ENCODE measurements at regions of chr17 and their contacts with region 1.

Region 1: GRCh38 chr17:28951991-28952975 is 965 bp upstream of the PHF12 start:
- DNase-seq: peak; percentile 97 to 99
- H3K4me3 ChIP-seq: peak overlapping the region; percentile 64
- H3K4me3 Mint-ChIP-seq: no peak overlapping the region
- H3K27ac Mint-ChIP-seq: no peak overlapping the region
- H3K4me1 ChIP-seq: peaks cover 10% of the 10 kb centered on the region
- H3K4me1 Mint-ChIP-seq: no peaks in the 10 kb centered on the region
- H3K27me3 ChIP-seq: no peaks in the 10 kb centered on the region
- H3K27me3 Mint-ChIP-seq: no peaks in the 10 kb centered on the region
- CTCF ChIP-seq: no peak

Region 2: GRCh38 chr17:28710861-28711722 is 241.2 kb before region 1 on chr17:
- CTCF ChIA-PET with region 1: no interaction called
- POLR2A ChIA-PET with region 1: interaction called, 10 read pairs
- intact Hi-C with region 1: no loop called
- DNase-seq: peak; percentile 95 to 98
- H3K4me3 ChIP-seq: peak overlapping the region; percentile 64
- H3K4me3 Mint-ChIP-seq: peak overlapping the region; percentile 82
- H3K27ac Mint-ChIP-seq: peak overlapping the region; percentile 87
- H3K4me1 ChIP-seq: peaks cover 11% of the 10 kb centered on the region
- H3K4me1 Mint-ChIP-seq: peaks cover 6% of the 10 kb centered on the region
- H3K27me3 ChIP-seq: no peaks in the 10 kb centered on the region
- H3K27me3 Mint-ChIP-seq: no peaks in the 10 kb centered on the region
- CTCF ChIP-seq: no peak

Region 3: GRCh38 chr17:28743225-28744103 is 208.8 kb before region 1 on chr17 and contains the start of gene TRAF4:
- CTCF ChIA-PET with region 1: interaction called, 3 read pairs
- POLR2A ChIA-PET with region 1: interaction called, 3 read pairs
- intact Hi-C with region 1: loop called (anchors 5 kb)
- DNase-seq: peak; percentile 83 to 91
- H3K4me3 ChIP-seq: peak within 1 kb of the TSS; percentile 68
- H3K4me3 Mint-ChIP-seq: peak within 1 kb of the TSS; percentile 95
- H3K27ac Mint-ChIP-seq: peak within 1 kb of the TSS; percentile 96
- H3K4me1 ChIP-seq: peaks cover 40% of the 10 kb centered on the region
- H3K4me1 Mint-ChIP-seq: peaks cover 12% of the 10 kb centered on the region
- H3K27me3 ChIP-seq: no peaks in the 10 kb centered on the region
- H3K27me3 Mint-ChIP-seq: no peaks in the 10 kb centered on the region
- CTCF ChIP-seq: peak in 1 of 2 experiments; percentile 18
- total RNA-seq, gene TRAF4: 140 and 154 TPM in 2 replicates

Region 4: DNA sequence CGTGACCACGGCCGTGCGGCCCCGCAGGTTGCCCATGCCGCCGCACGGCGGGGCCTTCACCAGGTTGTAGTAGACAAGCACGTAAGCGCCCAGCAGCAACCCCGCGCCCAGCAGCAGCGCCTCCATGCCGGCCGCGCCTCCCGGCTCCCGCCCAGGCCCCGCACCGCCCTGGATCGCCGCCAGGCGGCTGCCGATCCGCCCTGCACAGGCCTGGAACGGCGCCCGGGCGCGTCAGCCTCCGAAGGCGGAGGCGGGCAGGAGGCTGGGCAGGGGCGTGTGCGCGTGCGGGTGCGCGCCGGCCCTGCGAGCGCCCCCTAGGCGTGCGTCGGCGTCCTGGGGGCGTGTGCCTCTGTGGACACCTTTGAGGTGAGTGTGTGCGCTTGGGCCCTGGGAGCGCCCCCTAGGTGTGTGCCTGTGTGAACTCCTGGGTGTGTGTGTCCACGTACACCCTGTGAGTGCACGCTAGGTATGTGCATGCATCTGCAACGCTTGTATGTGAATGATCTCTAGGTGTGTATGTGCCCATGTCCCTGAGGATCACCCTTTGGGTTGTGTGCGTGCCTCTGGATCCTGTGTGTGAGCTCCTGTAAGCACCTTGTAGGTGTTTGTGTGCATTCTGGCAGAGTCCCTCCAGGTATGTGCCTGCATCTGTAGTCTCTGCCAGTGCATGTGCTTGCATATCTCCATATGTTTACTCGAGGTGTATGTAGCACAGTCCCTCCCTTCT is 49.3 kb before region 1 on chr17 and contains the start of gene DHRS13:
- CTCF ChIA-PET with region 1: interaction called, 5 read pairs
- POLR2A ChIA-PET with region 1: interaction called, 3 read pairs
- intact Hi-C with region 1: loop called (anchors 2 kb)
- DNase-seq: peak; percentile 95 to 99
- H3K4me3 ChIP-seq: peak within 1 kb of the TSS; percentile 72
- H3K4me3 Mint-ChIP-seq: peak within 1 kb of the TSS; percentile 81
- H3K27ac Mint-ChIP-seq: peak within 1 kb of the TSS; percentile 76
- H3K4me1 ChIP-seq: peaks cover 11% of the 10 kb centered on the region
- H3K4me1 Mint-ChIP-seq: peaks cover 24% of the 10 kb centered on the region
- H3K27me3 ChIP-seq: no peaks in the 10 kb centered on the region
- H3K27me3 Mint-ChIP-seq: no peaks in the 10 kb centered on the region
- CTCF ChIP-seq: peak; percentile 97 to 98
- total RNA-seq, gene DHRS13: 32.8 and 38.0 TPM in 2 replicates

Region 5: GRCh38 chr17:29116804-29117772 is 164.8 kb after region 1 on chr17:
- CTCF ChIA-PET with region 1: interaction called, 14 read pairs
- POLR2A ChIA-PET with region 1: no interaction called
- intact Hi-C with region 1: no loop called
- DNase-seq: peak; percentile 71 to 79
- H3K4me3 ChIP-seq: no peak overlapping the region
- H3K4me3 Mint-ChIP-seq: no peak overlapping the region
- H3K27ac Mint-ChIP-seq: peak overlapping the region; percentile 33
- H3K4me1 ChIP-seq: no peaks in the 10 kb centered on the region
- H3K4me1 Mint-ChIP-seq: no peaks in the 10 kb centered on the region
- H3K27me3 ChIP-seq: no peaks in the 10 kb centered on the region
- H3K27me3 Mint-ChIP-seq: no peaks in the 10 kb centered on the region
- CTCF ChIP-seq: peak; percentile 85 to 92

Region 6: DNA sequence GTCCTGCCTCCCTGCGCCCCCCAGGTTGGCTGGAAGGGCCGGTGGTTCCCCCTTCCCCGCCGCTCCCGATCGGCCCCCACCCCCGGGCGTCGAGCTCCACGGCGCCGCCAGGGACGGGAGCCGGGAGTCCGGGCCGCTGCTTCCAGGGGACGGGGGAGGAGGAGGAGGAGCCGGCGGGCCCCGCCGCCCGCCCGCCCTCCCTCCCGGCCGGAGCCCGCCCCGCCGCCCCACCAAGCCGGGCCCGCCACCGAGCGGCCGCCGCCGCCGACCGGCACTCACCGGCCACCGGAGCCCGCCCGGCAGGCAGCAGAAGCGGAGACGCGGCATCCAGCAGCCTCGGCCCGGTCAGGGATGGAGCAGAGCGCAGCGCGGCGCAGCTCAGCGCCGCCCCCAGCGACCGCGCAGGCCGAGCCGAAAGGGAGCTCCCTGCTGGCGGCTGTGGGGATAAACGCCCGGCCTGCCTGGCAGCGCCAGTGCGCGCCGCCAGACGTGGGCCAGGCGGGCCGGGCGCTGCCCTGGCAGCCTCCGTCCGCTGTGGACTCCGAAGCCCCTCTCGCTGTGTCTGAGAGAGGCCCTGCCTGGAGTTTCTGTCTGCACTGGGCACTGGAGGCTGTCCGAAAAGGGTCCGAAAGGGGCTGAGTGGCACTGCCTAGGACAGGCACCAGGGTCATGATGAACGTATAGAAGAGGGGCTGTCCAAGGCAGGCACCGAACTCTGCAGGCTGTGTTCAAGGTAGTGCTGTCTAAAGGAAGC is 227.9 kb after region 1 on chr17 and contains the start of gene MYO18A:
- CTCF ChIA-PET with region 1: interaction called, 12 read pairs
- POLR2A ChIA-PET with region 1: interaction called, 6 read pairs
- intact Hi-C with region 1: no loop called
- DNase-seq: peak; percentile 74 to 90
- H3K4me3 ChIP-seq: peak within 1 kb of the TSS; percentile 71
- H3K4me3 Mint-ChIP-seq: peak within 1 kb of the TSS; percentile 93
- H3K27ac Mint-ChIP-seq: peak within 1 kb of the TSS; percentile 93
- H3K4me1 ChIP-seq: peaks cover 31% of the 10 kb centered on the region
- H3K4me1 Mint-ChIP-seq: peaks cover 21% of the 10 kb centered on the region
- H3K27me3 ChIP-seq: no peaks in the 10 kb centered on the region
- H3K27me3 Mint-ChIP-seq: peaks cover 3% of the 10 kb centered on the region
- CTCF ChIP-seq: peak; percentile 94 to 95
- total RNA-seq, gene MYO18A: 47.1 and 55.5 TPM in 2 replicates

Measured in Caco-2 (cell line).